ENCODE measurements at regions of chrX and their contacts with region 1.

Region 1: GRCh38 chrX:136496770-136497598 is at the start of gene HTATSF1:
- DNase-seq: peak; percentile 95
- H3K4me3 Mint-ChIP-seq: peak within 1 kb of the TSS; percentile 94
- H3K27ac Mint-ChIP-seq: peak within 1 kb of the TSS; percentile 94
- H3K4me1 Mint-ChIP-seq: peaks cover 18% of the 10 kb centered on the region
- H3K27me3 Mint-ChIP-seq: peaks cover 4% of the 10 kb centered on the region
- total RNA-seq, gene HTATSF1: 49.4 and 55.1 TPM in 2 replicates

Region 2: DNA sequence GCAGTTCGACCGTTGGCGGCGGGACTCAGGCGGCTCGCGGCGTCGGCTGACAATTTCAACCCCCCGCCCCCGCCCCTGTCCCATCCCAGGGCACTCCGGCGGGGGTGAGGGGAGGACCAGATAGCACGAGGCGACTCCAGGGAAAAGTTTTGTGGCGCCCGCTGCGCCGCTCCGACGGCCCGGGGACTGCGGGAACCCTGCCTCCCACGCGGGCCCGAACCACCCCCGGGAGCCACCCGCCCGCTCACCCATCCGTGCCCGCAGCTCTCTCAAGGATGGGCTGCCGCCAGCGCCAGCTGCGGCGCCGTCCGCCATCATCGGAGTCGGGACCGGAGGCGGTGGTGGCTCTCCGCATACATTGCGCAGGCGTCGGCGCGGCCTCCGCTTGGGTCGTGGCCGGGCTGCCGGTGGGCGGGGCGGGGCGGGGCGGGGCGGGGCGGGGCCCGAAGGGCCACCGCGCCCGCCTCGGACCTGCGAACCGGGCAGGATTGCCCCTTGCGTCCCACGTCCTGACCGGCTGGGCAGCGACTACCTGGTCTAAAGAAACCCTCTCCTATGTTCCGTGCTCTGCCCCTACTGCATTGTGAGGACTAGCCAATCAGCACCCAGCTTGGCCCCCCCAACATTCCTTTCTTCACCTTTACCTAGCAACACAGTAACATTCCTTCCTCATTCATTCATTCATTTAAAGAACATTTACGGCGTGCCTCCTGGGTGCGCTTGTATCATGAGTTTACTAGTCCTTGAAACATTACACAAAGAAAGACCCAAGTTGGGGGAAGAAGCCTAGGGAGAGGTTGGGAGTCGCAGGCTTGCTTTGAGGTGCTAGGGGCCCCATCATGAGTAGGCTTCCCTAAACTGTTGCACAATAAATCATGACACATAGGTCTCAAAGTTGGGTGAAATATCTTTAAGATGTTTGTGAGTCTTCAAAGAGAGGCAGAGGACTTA is 245.7 kb before region 1 on chrX and contains the start of gene MAP7D3:
- intact Hi-C with region 1: loop called (anchors 5 kb)
- DNase-seq: peak; percentile 90
- H3K4me3 Mint-ChIP-seq: peak within 1 kb of the TSS; percentile 92
- H3K27ac Mint-ChIP-seq: peak within 1 kb of the TSS; percentile 92
- H3K4me1 Mint-ChIP-seq: peaks cover 15% of the 10 kb centered on the region
- H3K27me3 Mint-ChIP-seq: no peaks in the 10 kb centered on the region
- total RNA-seq, gene MAP7D3: 24.5 and 26.7 TPM in 2 replicates

Region 3: GRCh38 chrX:136588041-136588788 is 91.2 kb after region 1 on chrX:
- intact Hi-C with region 1: loop called (anchors 2 kb)
- DNase-seq: peak; percentile 63
- H3K4me3 Mint-ChIP-seq: peak overlapping the region; percentile 62
- H3K27ac Mint-ChIP-seq: peak overlapping the region; percentile 87
- H3K4me1 Mint-ChIP-seq: peaks cover 49% of the 10 kb centered on the region
- H3K27me3 Mint-ChIP-seq: no peaks in the 10 kb centered on the region

Region 4: DNA sequence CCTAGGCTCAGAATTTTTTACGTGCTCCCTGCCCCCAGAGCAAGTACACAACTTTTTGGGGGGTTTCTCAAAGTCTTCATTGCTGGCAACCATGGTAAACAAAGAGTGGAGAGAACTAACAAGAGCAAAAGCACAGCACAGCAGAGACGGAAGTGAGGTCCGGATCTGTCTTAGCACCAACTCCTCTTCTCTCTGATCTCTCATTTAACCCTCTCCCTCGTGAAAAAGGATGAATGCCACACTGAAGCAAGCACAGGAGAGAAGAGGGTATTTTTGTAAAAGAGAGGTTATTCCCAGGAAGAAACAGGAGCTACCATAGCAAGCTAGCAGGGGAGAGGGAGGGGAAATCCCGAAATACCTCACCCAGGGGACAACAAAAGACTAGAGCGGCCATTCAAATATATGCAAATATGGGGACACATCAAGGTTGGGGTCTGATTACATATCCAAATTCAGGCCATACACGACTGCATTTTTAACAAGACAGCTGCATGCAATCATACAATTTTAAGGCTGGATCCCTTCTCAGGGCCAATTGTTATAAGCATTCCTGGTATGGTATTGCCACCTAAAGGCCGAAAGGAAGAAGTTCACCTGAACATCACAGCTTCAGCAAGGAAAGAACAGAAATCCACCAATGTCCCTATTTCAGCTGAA is 197.6 kb after region 1 on chrX:
- intact Hi-C with region 1: loop called (anchors 2 kb)
- DNase-seq: peak; percentile 77
- H3K4me3 Mint-ChIP-seq: peak overlapping the region; percentile 86
- H3K27ac Mint-ChIP-seq: peak overlapping the region; percentile 99
- H3K4me1 Mint-ChIP-seq: peaks cover 54% of the 10 kb centered on the region
- H3K27me3 Mint-ChIP-seq: no peaks in the 10 kb centered on the region

Region 5: DNA sequence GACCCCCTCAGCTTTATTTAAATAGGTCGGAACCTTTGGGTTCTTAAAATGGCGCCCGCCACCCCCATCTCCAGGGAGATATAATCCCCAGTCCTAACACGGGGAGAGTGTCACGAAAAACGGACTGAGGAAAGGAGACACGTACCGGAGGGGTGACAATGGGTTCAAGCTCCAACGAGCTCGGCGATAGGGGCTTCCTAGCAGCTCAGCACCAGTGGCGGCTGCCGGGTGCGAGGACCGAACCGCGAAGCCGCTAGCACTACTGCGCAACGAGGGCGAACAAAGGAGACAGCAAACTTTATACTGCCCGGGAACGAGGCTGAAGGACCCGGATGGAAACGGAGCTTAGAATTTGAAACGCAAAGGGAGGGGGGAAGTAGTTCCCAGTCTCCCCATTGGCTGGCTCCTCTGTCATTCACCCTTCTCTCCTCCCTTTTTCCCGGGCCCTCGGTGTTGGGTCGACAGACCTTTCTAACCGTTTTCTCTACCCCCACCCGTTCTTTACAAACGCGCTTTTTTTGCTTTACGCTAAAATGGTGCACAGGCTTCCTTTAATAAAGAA is 383.5 kb after region 1 on chrX and contains the start of gene RBMX:
- intact Hi-C with region 1: loop called (anchors 1 kb)
- DNase-seq: peak; percentile 96
- H3K4me3 Mint-ChIP-seq: peak within 1 kb of the TSS; percentile 97
- H3K27ac Mint-ChIP-seq: peak within 1 kb of the TSS; percentile 99
- H3K4me1 Mint-ChIP-seq: peaks cover 2% of the 10 kb centered on the region
- H3K27me3 Mint-ChIP-seq: no peaks in the 10 kb centered on the region
- total RNA-seq, gene RBMX: 324 and 334 TPM in 2 replicates

Region 6: GRCh38 chrX:137031517-137032340 is 534.7 kb after region 1 on chrX:
- intact Hi-C with region 1: loop called (anchors 2 kb)
- DNase-seq: peak; percentile 84
- H3K4me3 Mint-ChIP-seq: no peak overlapping the region
- H3K27ac Mint-ChIP-seq: no peak overlapping the region
- H3K4me1 Mint-ChIP-seq: peaks cover 11% of the 10 kb centered on the region
- H3K27me3 Mint-ChIP-seq: peaks cover 65% of the 10 kb centered on the region

Region 7: GRCh38 chrX:137062915-137063617 is 566.1 kb after region 1 on chrX:
- intact Hi-C with region 1: no loop called
- DNase-seq: no peak
- H3K4me3 Mint-ChIP-seq: no peak overlapping the region
- H3K27ac Mint-ChIP-seq: no peak overlapping the region
- H3K4me1 Mint-ChIP-seq: no peaks in the 10 kb centered on the region
- H3K27me3 Mint-ChIP-seq: peaks cover 3% of the 10 kb centered on the region

Measured in activated CD4-positive, alpha-beta T cell treated with anti-CD3 and anti-CD28 coated beads, Interleukin-2, amount 10 ng/mL, durations not matched to agents 24 days and 14 days (primary cell).